Mammary epithelial cell (primary cell): ENCODE measurements at regions of chr12 and their contacts with region 1.

Region 1: GRCh38 chr12:46675736-46676135 is 150.1 kb downstream of the SLC38A4 start:
- DNase-seq: peak; percentile 36
- H3K4me3 ChIP-seq: no peak overlapping the region
- H3K27ac ChIP-seq: peak overlapping the region; percentile 94
- H3K4me1 ChIP-seq: peaks cover 63% of the 10 kb centered on the region
- H3K27me3 ChIP-seq: no peaks in the 10 kb centered on the region
- CTCF ChIP-seq: peak; percentile 51 to 55

Region 2: DNA sequence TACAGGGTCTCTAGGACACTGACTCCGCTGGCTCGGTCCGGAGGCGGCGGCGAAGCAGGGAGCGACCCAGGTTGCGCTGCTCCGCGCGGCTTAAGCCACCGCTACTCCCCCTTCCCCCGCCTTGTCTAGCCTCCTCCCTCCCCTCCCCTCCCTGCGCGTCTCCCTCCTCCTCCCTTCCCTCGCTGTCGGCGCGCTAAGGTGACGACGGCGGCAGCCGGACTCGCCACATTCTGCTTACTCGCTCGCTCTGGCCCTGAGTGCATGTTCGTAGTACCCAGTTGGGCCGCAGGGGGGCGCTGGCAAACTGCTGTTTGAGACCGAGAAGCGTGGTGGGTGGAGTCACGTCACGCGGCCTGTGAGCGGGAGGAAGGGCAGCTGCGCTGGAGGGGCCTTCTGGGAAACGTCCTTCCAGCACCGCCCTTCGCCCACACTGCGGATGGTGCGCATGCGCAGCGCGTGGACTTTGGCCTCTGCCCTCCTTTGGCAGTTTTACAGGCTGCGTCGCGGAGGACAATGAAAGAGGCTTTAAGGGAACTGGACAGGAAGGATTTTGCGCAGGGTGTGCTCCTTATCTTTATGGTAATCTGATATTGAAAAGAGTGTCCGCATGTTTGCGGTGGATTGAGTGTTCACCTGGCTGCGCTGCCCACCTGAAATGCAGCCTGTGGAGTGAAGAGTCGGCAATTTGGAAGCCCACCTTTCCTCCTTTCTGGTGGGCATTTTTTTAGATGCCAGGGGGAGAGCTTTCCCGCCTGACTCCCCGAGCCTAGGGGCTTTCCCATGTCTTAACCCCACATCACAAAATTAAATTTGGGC is 685.1 kb before region 1 on chr12 and contains the start of gene SCAF11:
- CTCF ChIA-PET with region 1: interaction called, 3 read pairs
- dilution Hi-C with region 1: no loop called
- in situ Hi-C with region 1: no loop called
- intact Hi-C with region 1: loop called (anchors 5 kb)
- DNase-seq: peak; percentile 100
- H3K4me3 ChIP-seq: peak within 1 kb of the TSS; percentile 53 to 96 (median 67)
- H3K27ac ChIP-seq: peak within 1 kb of the TSS; percentile 83
- H3K4me1 ChIP-seq: peaks cover 23% of the 10 kb centered on the region
- H3K27me3 ChIP-seq: no peaks in the 10 kb centered on the region
- CTCF ChIP-seq: peak; percentile 92 to 95
- total RNA-seq, gene SCAF11: 99.2 to 100 TPM

Region 3: GRCh38 chr12:46153268-46153872 is 522.4 kb before region 1 on chr12:
- CTCF ChIA-PET with region 1: interaction called, 4 read pairs
- dilution Hi-C with region 1: no loop called
- in situ Hi-C with region 1: no loop called
- intact Hi-C with region 1: loop called (anchors 5 kb)
- DNase-seq: no peak
- H3K4me3 ChIP-seq: peak overlapping the region in 1 of 3 experiments; percentile 17
- H3K27ac ChIP-seq: no peak overlapping the region
- H3K4me1 ChIP-seq: peaks cover 11% of the 10 kb centered on the region
- H3K27me3 ChIP-seq: no peaks in the 10 kb centered on the region
- CTCF ChIP-seq: peak; percentile 67 to 77

Region 4: DNA sequence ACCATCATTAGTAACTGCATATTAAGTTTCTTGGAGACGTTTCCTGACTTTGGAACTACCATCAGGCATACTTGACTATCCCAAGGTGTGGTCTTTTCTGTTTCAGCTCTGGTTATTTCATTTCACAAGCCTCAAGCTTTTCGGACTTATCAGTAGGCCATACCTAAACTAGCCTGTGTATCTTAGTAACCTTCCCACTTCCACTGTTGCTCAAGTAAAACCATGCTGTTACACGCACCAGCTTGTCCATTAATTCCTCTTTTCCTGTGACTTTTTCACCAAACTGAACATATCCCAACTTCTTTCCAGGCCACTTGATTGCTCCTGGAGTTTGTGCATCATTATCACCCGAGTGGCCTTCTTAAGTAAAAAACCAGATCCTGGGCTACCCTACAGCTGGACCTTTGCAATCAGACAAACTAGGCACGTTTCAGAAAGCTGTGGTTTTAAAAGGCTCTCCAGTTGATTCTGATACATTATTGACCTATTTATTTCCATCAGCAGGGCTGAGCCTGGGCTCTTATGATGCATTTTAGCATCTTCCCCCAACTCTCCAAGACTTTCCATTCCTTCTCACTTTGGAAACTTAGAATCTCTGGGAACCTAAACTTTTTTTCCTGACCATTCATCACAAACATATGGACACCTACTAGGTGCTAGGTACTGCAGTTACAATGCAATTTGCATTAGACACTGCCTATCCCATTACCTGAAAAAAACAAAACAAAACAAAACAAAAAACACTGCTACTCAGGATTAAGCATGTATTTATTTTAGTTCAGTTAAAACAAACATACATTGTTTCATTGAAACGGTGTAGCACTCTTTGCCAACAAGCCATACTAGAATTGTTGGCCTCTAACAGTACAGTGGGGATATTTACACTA is 318.1 kb before region 1 on chr12:
- CTCF ChIA-PET with region 1: interaction called, 3 read pairs
- dilution Hi-C with region 1: no loop called
- in situ Hi-C with region 1: loop called in 1 of 2 experiments (anchors 5 kb)
- intact Hi-C with region 1: no loop called
- DNase-seq: peak; percentile 87
- H3K4me3 ChIP-seq: no peak overlapping the region
- H3K27ac ChIP-seq: peak overlapping the region; percentile 13
- H3K4me1 ChIP-seq: peaks cover 28% of the 10 kb centered on the region
- H3K27me3 ChIP-seq: no peaks in the 10 kb centered on the region
- CTCF ChIP-seq: no peak

Region 5: GRCh38 chr12:46430340-46430948 is 245.3 kb before region 1 on chr12:
- CTCF ChIA-PET with region 1: no interaction called
- dilution Hi-C with region 1: no loop called
- in situ Hi-C with region 1: no loop called
- intact Hi-C with region 1: loop called (anchors 2 kb)
- DNase-seq: peak; percentile 92
- H3K4me3 ChIP-seq: peak overlapping the region in 1 of 3 experiments; percentile 23
- H3K27ac ChIP-seq: peak overlapping the region; percentile 100
- H3K4me1 ChIP-seq: peaks cover 35% of the 10 kb centered on the region
- H3K27me3 ChIP-seq: no peaks in the 10 kb centered on the region
- CTCF ChIP-seq: no peak

Region 6: DNA sequence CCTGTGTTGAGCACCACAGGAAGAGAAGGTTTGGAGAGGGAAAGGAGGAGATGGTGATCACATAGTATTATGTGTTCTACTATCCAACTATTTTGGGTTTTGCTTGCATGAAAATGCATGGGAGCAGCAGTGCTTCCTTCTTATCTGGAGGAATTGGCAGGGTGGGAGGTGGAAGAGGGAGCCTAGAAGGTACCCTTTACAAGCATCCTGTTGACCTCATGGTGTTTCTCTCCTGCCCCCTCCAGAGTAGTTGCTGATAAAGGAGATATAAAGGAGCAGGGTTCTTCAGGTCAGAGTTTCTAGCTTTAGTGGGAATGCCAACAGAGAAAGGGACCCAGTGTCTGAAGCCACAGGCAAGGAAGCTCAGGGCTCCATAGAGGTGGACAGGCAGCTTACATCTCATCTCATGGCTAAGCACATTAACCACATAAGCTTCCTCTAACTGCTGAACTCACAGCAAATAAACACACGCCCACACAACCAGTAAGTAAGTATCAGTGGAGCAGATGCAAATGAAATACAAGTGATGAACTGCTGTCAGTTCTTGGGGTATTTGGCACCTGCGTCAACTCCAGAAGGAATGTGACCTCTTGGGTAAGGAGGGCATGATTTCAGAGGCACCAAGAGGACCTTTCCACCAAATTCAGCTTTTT is 129.0 kb before region 1 on chr12:
- CTCF ChIA-PET with region 1: no interaction called
- dilution Hi-C with region 1: no loop called
- in situ Hi-C with region 1: no loop called
- intact Hi-C with region 1: loop called (anchors 2 kb)
- DNase-seq: peak; percentile 71
- H3K4me3 ChIP-seq: no peak overlapping the region
- H3K27ac ChIP-seq: peak overlapping the region; percentile 100
- H3K4me1 ChIP-seq: peaks cover 56% of the 10 kb centered on the region
- H3K27me3 ChIP-seq: no peaks in the 10 kb centered on the region
- CTCF ChIP-seq: no peak

Region 7: GRCh38 chr12:46933947-46934346 is 258.2 kb after region 1 on chr12:
- CTCF ChIA-PET with region 1: no interaction called
- dilution Hi-C with region 1: no loop called
- in situ Hi-C with region 1: loop called in 1 of 2 experiments (anchors 10 kb)
- intact Hi-C with region 1: loop called (anchors 1 kb)
- DNase-seq: peak; percentile 52
- H3K4me3 ChIP-seq: no peak overlapping the region
- H3K27ac ChIP-seq: no peak overlapping the region
- H3K4me1 ChIP-seq: peaks cover 8% of the 10 kb centered on the region
- H3K27me3 ChIP-seq: no peaks in the 10 kb centered on the region
- CTCF ChIP-seq: peak; percentile 70 to 75